T-cell (primary cell): ENCODE measurements at regions of chr2 and their contacts with region 1.

Region 1: DNA sequence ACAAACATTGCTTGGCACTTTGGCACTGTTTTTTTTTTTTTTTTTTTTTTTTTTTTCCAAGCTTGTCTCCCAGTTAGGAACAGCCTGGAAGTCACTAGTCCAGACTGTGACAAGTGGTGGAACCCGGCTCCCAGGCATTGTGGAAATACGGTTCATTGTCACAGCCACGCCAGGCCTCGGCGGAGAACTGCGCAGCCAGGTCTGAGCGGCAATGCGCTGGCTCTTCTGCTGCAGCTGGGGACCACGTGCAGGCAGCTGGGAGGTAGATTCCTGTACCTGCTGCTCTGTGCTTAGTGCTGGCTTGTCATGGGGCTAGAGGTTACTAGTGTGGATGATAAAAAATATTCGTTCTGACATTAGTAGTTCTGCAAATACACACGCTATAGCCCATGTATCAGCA is 5.0 kb downstream of the NTSR2 start:
- DNase-seq: no peak
- ATAC-seq: no peak
- H3K4me3 ChIP-seq: no peak overlapping the region
- H3K4me3 Mint-ChIP-seq: no peak overlapping the region
- H3K27ac ChIP-seq: no peak overlapping the region
- H3K27ac Mint-ChIP-seq: no peak overlapping the region
- H3K4me1 ChIP-seq: no peaks in the 10 kb centered on the region
- H3K4me1 Mint-ChIP-seq: peaks cover 0 to 4% (median 0%) of the 10 kb centered on the region in 3 donors
- H3K27me3 ChIP-seq: peaks cover 4 to 33% of the 10 kb centered on the region in 2 experiments
- H3K27me3 Mint-ChIP-seq: peaks cover 37 to 41% of the 10 kb centered on the region in 2 donors

Region 2: DNA sequence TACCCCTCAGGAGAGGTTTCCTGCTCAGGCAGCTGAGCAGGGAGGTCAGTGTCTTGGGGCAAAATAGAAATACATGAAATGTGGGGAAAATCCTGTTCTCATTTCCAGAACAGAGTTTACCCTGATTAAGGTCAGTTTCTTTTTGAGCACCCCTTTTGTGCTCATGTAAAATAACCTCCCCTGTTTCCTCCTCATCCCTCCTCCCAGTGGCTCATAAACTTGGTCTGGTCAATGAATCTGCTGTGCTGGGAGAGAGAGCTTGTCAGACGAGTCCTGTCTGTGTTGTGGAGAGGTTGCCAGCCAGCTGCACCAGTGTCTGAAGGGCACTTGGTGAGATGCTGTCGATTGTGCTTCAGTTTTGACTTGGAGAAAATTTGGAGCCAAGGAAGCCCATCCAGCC is 43.6 kb before region 1 on chr2:
- CTCF ChIA-PET with region 1: no interaction called
- POLR2A ChIA-PET with region 1: no interaction called
- DNase-seq: no peak
- ATAC-seq: no peak
- H3K4me3 ChIP-seq: no peak overlapping the region
- H3K4me3 Mint-ChIP-seq: no peak overlapping the region
- H3K27ac ChIP-seq: no peak overlapping the region
- H3K27ac Mint-ChIP-seq: no peak overlapping the region
- H3K4me1 ChIP-seq: no peaks in the 10 kb centered on the region
- H3K4me1 Mint-ChIP-seq: no peaks in the 10 kb centered on the region
- H3K27me3 ChIP-seq: peaks cover 0 to 5% of the 10 kb centered on the region in 2 experiments
- H3K27me3 Mint-ChIP-seq: peaks cover 0 to 5% of the 10 kb centered on the region in 2 donors

Region 3: GRCh38 chr2:11636593-11637362 is 28.2 kb before region 1 on chr2:
- CTCF ChIA-PET with region 1: no interaction called
- POLR2A ChIA-PET with region 1: no interaction called
- DNase-seq: no peak
- ATAC-seq: no peak
- H3K4me3 ChIP-seq: no peak overlapping the region
- H3K4me3 Mint-ChIP-seq: no peak overlapping the region
- H3K27ac ChIP-seq: no peak overlapping the region
- H3K27ac Mint-ChIP-seq: no peak overlapping the region
- H3K4me1 ChIP-seq: no peaks in the 10 kb centered on the region
- H3K4me1 Mint-ChIP-seq: no peaks in the 10 kb centered on the region
- H3K27me3 ChIP-seq: peaks cover 0 to 18% of the 10 kb centered on the region in 2 experiments
- H3K27me3 Mint-ChIP-seq: peaks cover 4 to 15% of the 10 kb centered on the region in 2 donors

Region 4: GRCh38 chr2:11681722-11682589 is 16.9 kb after region 1 on chr2:
- CTCF ChIA-PET with region 1: no interaction called
- POLR2A ChIA-PET with region 1: interaction called in 1 of 2 experiments, 12 read pairs
- DNase-seq: peak in 29 of 35 experiments; percentile 15 to 63 (median 35)
- ATAC-seq: peak in 2 of 4 experiments; percentile 31 to 66
- H3K4me3 ChIP-seq: no peak overlapping the region
- H3K4me3 Mint-ChIP-seq: no peak overlapping the region
- H3K27ac ChIP-seq: no peak overlapping the region
- H3K27ac Mint-ChIP-seq: no peak overlapping the region
- H3K4me1 ChIP-seq: no peaks in the 10 kb centered on the region
- H3K4me1 Mint-ChIP-seq: peaks cover 4 to 8% (median 5%) of the 10 kb centered on the region in 3 donors
- H3K27me3 ChIP-seq: peaks cover under 1 to 49% of the 10 kb centered on the region in 2 experiments
- H3K27me3 Mint-ChIP-seq: peaks cover 12 to 34% of the 10 kb centered on the region in 2 donors